Activated CD8-positive, alpha-beta T cell treated with anti-CD3 and anti-CD28 coated beads for 36 hours (primary cell): ENCODE measurements at regions of chr19 and their contacts with region 1.

Region 1: DNA sequence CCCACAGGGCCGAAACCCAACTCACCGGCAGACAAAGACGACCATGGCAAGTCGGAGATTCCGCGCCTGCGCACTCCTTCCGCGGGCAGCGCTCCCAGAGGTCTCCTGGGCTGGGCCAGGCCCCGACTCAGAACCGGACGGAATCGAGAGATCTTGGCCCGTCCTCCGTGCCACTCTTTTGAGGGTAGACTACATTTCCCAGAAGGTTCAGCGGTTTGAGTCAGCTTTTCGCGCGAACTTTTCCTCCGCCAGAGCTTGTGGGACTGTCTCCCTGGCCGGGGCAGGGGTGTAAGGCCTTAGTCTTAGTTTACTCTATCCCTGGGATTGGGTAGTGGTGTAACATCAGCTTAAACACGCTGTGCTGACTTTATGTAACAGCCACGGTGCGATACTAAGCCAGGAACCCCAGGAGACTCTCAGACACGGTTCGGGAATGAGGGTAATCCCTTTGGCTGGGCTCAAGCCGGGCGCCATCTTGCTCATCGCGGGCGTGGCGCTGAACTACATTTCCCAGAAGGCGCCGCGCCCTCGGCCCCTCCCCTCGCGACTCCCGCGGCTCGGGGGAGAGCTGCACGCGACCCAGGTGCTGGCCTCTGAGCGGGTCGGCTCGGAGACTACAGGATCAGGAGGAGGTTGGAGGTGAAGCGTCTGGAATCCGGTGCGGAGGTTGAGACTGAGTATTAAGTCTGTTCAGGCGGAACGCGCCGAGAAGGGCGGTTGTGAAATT is at the start of gene ZNF260:
- DNase-seq: peak; percentile 94
- ATAC-seq: peak; percentile 88
- H3K4me3 Mint-ChIP-seq: peak within 1 kb of the TSS; percentile 90
- H3K27ac Mint-ChIP-seq: peak within 1 kb of the TSS; percentile 97
- H3K4me1 Mint-ChIP-seq: peaks cover 15% of the 10 kb centered on the region
- H3K27me3 Mint-ChIP-seq: no peaks in the 10 kb centered on the region
- CTCF ChIP-seq: no peak
- total RNA-seq, gene ZNF260: 3.7 to 6.4 TPM

Region 2: GRCh38 chr19:36436531-36436930 is 91.8 kb before region 1 on chr19:
- CTCF ChIA-PET with region 1: no interaction called
- POLR2A ChIA-PET with region 1: no interaction called
- intact Hi-C with region 1: no loop called
- DNase-seq: no peak
- ATAC-seq: no peak
- H3K4me3 Mint-ChIP-seq: no peak overlapping the region
- H3K27ac Mint-ChIP-seq: no peak overlapping the region
- H3K4me1 Mint-ChIP-seq: no peaks in the 10 kb centered on the region
- H3K27me3 Mint-ChIP-seq: no peaks in the 10 kb centered on the region
- CTCF ChIP-seq: no peak

Region 3: DNA sequence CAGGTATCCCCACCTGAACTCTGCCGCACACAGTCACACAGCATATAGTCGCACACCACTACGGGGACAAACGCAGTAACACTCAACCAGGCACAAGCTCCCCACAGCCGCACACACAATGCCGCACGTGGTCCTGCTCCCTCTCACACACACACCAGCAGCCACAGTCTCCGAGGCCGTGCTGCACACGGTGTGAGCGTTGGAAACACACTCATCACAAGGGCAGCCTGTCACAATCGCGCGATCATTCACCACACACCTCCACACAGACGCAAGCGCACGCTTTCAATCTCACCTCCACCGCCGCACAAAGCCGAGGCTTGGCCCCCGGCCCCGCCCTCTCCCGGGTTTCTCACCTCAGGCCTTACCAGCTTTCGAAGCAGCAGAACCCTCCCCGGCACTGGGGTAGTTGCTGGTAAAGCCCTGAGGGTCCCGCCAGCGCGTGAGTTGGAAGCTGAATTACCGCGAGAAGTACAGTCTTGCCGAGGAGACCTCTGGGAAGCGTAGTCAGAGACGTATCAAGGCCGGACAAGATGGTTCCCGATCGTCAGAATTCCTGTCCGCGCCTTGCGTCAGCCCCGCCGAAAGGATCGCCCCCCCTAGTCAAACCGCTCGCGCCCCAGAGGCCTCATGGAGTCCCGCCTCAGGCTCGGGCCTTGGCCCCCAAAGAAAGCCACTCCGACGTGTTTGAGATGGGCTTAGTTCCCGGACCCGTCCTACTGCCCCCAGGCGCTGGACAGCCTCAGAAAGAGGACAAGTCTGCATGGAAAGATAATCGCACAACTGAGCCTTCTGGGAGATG is 39.0 kb before region 1 on chr19 and contains the start of gene ZNF566:
- CTCF ChIA-PET with region 1: no interaction called
- POLR2A ChIA-PET with region 1: interaction called, 12 read pairs
- intact Hi-C with region 1: no loop called
- DNase-seq: peak; percentile 98
- ATAC-seq: peak; percentile 94
- H3K4me3 Mint-ChIP-seq: peak within 1 kb of the TSS; percentile 94
- H3K27ac Mint-ChIP-seq: peak within 1 kb of the TSS; percentile 98
- H3K4me1 Mint-ChIP-seq: peaks cover 25% of the 10 kb centered on the region
- H3K27me3 Mint-ChIP-seq: no peaks in the 10 kb centered on the region
- CTCF ChIP-seq: no peak
- total RNA-seq, gene ZNF566: 5.6 to 6.5 TPM

Region 4: DNA sequence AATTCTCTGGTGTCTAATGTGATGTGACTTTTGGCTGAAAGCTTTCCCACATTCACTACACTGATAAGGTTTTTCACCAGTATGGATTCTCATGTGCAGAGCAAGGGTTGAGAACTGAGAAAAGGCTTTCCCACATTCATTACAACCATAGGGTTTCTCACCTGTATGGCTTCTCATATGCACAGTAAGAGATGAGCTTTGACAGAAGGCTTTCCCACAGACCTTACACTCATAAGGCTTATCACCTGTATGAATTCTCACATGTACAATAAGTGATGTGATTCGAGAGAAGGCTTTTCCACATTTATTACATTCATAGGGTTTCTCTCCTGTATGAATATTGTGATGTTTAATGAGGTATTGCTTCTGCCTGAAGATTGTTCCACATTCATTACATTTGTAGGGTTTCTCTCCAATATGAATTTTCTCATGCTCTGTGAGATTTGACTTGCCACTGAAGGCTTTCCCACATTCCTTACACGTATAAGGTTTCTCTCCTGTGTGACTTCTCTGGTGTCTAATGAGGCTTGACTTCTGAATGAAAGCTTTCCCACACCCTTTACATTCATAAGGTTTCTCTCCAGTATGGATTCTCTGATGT is 14.2 kb before region 1 on chr19:
- CTCF ChIA-PET with region 1: no interaction called
- POLR2A ChIA-PET with region 1: no interaction called
- intact Hi-C with region 1: no loop called
- DNase-seq: no peak
- ATAC-seq: no peak
- H3K4me3 Mint-ChIP-seq: no peak overlapping the region
- H3K27ac Mint-ChIP-seq: no peak overlapping the region
- H3K4me1 Mint-ChIP-seq: peaks cover 2% of the 10 kb centered on the region
- H3K27me3 Mint-ChIP-seq: no peaks in the 10 kb centered on the region
- CTCF ChIP-seq: no peak

Region 5: DNA sequence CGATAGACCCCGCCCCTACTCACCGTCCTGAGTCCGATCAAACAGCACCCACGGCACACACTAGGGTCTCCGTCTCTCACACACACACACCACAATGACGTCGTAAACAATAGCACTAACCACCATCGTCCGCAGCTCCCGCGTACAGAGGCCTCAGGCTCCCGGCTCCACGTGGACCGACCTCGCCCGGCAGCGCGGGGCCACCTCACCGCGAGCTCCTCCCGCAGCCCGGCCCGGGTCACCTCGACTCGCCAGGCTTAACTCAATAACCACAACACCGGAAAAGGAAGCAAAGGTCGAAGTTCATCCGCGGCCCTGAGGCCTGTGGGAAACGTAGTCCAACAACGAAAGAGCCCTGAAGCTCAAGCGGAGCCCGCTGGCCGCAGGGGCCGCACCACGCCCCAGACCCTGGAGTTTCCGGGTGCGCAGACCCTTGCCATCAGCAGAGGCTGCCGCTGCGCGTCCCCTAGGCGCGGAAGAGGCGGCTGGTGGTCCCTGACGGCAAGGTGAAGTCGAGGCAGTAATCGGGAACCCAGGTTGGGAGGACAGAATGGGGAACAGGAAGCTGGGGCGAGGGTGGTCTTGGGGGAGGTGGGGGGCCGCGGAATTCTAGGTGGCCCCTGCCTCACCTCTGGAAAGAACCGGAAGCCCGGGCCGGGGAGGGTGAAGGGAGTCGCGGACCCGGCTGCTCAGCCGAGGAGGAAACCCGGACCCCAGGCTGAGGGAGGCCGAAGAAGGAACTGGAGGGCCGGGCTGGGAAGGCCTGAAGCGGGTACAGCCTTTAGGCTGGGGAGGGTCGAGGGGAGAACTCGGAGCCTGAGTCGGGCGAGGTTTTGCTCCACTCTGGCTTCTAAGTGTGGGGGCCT is 44.9 kb after region 1 on chr19 and contains the start of gene ZNF529:
- CTCF ChIA-PET with region 1: no interaction called
- POLR2A ChIA-PET with region 1: interaction called, 10 read pairs
- intact Hi-C with region 1: no loop called
- DNase-seq: peak; percentile 92
- ATAC-seq: peak; percentile 90
- H3K4me3 Mint-ChIP-seq: peak within 1 kb of the TSS; percentile 83
- H3K27ac Mint-ChIP-seq: peak within 1 kb of the TSS; percentile 95
- H3K4me1 Mint-ChIP-seq: peaks cover 27% of the 10 kb centered on the region
- H3K27me3 Mint-ChIP-seq: no peaks in the 10 kb centered on the region
- CTCF ChIP-seq: no peak
- total RNA-seq, gene ZNF529: 18.5 to 19.2 TPM

Region 6: GRCh38 chr19:36687214-36688056 is 159.1 kb after region 1 on chr19 and contains the start of gene ZNF567:
- CTCF ChIA-PET with region 1: no interaction called
- POLR2A ChIA-PET with region 1: no interaction called
- intact Hi-C with region 1: loop called (anchors 5 kb)
- DNase-seq: peak; percentile 99
- ATAC-seq: peak; percentile 94
- H3K4me3 Mint-ChIP-seq: peak within 1 kb of the TSS; percentile 87
- H3K27ac Mint-ChIP-seq: peak within 1 kb of the TSS; percentile 89
- H3K4me1 Mint-ChIP-seq: peaks cover 25% of the 10 kb centered on the region
- H3K27me3 Mint-ChIP-seq: no peaks in the 10 kb centered on the region
- CTCF ChIP-seq: no peak
- total RNA-seq, gene ZNF567: 6.4 to 7.6 TPM